ENCODE measurements at regions of chr14 and their contacts with region 1.

Region 1: GRCh38 chr14:44961604-44962333 is at the starts of genes KLHL28 and TOGARAM1:
- DNase-seq: peak; percentile 91 to 95
- H3K4me3 ChIP-seq: peak within 1 kb of the TSS; percentile 84 to 98 (median 94)
- H3K27ac ChIP-seq: peak within 1 kb of the TSS; percentile 83
- H3K4me1 ChIP-seq: peaks cover 0 to 8% (median 3%) of the 10 kb centered on the region in 4 experiments; a peak in 2 of 7 replicates
- H3K27me3 ChIP-seq: no peaks in the 10 kb centered on the region
- CTCF ChIP-seq: no peak
- EP300 ChIP-seq: no peak
- POLR2A ChIP-seq: peak; percentile 76 to 98
- RAD21 ChIP-seq: no peak
- total RNA-seq, gene KLHL28: 8.4 and 10.5 TPM in 2 replicates
- total RNA-seq, gene TOGARAM1: 6.8 and 8.9 TPM in 2 replicates

Region 2: GRCh38 chr14:45083971-45084722 is 122.4 kb after region 1 on chr14 and contains the start of gene PRPF39:
- CTCF ChIA-PET with region 1: no interaction called
- POLR2A ChIA-PET with region 1: interaction called, 12 read pairs
- DNase-seq: peak; percentile 72 to 96
- H3K4me3 ChIP-seq: peak within 1 kb of the TSS; percentile 82 to 90 (median 86)
- H3K27ac ChIP-seq: peak within 1 kb of the TSS; percentile 81
- H3K4me1 ChIP-seq: peaks cover 0 to 6% (median 4%) of the 10 kb centered on the region in 4 experiments; a peak in 3 of 7 replicates
- H3K27me3 ChIP-seq: no peaks in the 10 kb centered on the region
- CTCF ChIP-seq: no peak
- EP300 ChIP-seq: no peak
- POLR2A ChIP-seq: peak; percentile 88 to 95
- RAD21 ChIP-seq: no peak
- total RNA-seq, gene PRPF39: 36.7 and 43.3 TPM in 2 replicates

Region 3: DNA sequence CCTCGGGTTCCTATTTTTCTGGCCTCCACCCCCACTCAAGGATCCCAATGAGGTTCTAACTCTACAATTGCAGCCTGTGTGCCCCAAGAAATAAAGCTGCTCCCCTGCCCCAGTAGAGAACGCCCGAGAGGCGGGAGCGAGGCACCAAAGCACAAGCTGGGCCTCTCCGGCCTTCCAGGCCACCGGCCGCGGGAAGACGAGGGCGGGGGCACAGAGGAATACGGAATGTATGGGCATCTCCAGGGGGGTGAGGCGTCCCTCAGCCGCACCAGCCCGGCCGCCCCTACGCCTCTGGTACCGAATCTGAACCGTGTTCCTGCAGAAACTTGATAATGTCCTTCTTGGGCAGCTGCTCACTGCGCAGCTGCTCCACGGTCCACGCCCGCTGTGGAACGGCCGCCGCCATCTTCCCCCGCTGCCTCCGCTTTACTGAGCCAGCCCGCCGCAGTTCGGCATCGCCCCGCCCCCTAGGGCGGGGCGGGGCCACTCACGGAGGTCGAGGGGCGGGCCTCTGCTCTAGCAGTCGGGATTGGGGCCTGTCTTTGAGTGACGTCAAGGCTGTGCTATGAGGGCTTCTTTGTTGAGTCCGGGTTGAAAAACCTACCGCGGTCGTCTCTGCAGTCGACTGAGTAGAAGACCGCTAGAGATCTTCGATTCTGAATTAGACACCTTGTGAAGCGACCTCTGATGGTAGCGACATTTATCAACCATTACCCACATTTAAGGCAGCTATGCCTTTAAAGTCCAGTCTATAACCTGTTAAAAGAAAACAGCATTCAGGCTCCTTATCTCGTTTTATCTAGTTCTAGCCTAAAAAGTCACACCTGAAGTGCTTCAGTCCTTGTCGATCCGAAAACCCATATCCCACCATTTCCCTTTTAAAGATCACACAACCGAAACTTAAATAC is 172.5 kb after region 1 on chr14 and contains the start of gene FKBP3:
- CTCF ChIA-PET with region 1: no interaction called
- POLR2A ChIA-PET with region 1: interaction called, 10 read pairs
- DNase-seq: peak; percentile 87 to 94
- H3K4me3 ChIP-seq: peak within 1 kb of the TSS; percentile 84 to 94 (median 91)
- H3K27ac ChIP-seq: peak within 1 kb of the TSS; percentile 97
- H3K4me1 ChIP-seq: peaks cover 0 to 3% (median 0%) of the 10 kb centered on the region in 4 experiments; a peak in 3 of 7 replicates
- H3K27me3 ChIP-seq: no peaks in the 10 kb centered on the region
- CTCF ChIP-seq: peak in 1 of 3 experiments; percentile 35; a peak in 1 of 4 replicates
- EP300 ChIP-seq: peak in 1 of 2 experiments; percentile 86; a peak in 1 of 3 replicates
- POLR2A ChIP-seq: peak; percentile 95 to 98
- RAD21 ChIP-seq: peak in 1 of 2 experiments; percentile 13; a peak in 1 of 4 replicates
- total RNA-seq, gene FKBP3: 148 and 149 TPM in 2 replicates